Natural killer cell (primary cell): ENCODE measurements at regions of chr11 and their contacts with region 1.

Region 1: GRCh38 chr11:59171508-59172322 is at the start of gene DTX4:
- DNase-seq: peak; percentile 86 to 93
- ATAC-seq: peak; percentile 90 to 95 (median 91)
- H3K4me3 ChIP-seq: peak within 1 kb of the TSS; percentile 69
- H3K4me3 Mint-ChIP-seq: peak within 1 kb of the TSS; percentile 88
- H3K27ac ChIP-seq: peak within 1 kb of the TSS; percentile 39
- H3K27ac Mint-ChIP-seq: peak within 1 kb of the TSS in 1 of 2 donors; percentile 40
- H3K4me1 ChIP-seq: peaks cover 12% of the 10 kb centered on the region
- H3K4me1 Mint-ChIP-seq: peaks cover 7 to 9% of the 10 kb centered on the region in 2 donors
- H3K27me3 ChIP-seq: peaks cover 9% of the 10 kb centered on the region
- H3K27me3 Mint-ChIP-seq: peaks cover 14 to 19% of the 10 kb centered on the region in 2 donors
- CTCF ChIP-seq: peak; percentile 84
- total RNA-seq, gene DTX4: 0.21 to 0.90 (median 0.59) TPM

Region 2: GRCh38 chr11:58941838-58942237 is 229.9 kb before region 1 on chr11:
- intact Hi-C with region 1: no loop called
- DNase-seq: no peak
- ATAC-seq: no peak
- H3K4me3 ChIP-seq: no peak overlapping the region
- H3K4me3 Mint-ChIP-seq: no peak overlapping the region
- H3K27ac ChIP-seq: no peak overlapping the region
- H3K27ac Mint-ChIP-seq: no peak overlapping the region
- H3K4me1 ChIP-seq: no peaks in the 10 kb centered on the region
- H3K4me1 Mint-ChIP-seq: no peaks in the 10 kb centered on the region
- H3K27me3 ChIP-seq: no peaks in the 10 kb centered on the region
- H3K27me3 Mint-ChIP-seq: peaks cover 2 to 7% of the 10 kb centered on the region in 2 donors
- CTCF ChIP-seq: no peak

Region 3: DNA sequence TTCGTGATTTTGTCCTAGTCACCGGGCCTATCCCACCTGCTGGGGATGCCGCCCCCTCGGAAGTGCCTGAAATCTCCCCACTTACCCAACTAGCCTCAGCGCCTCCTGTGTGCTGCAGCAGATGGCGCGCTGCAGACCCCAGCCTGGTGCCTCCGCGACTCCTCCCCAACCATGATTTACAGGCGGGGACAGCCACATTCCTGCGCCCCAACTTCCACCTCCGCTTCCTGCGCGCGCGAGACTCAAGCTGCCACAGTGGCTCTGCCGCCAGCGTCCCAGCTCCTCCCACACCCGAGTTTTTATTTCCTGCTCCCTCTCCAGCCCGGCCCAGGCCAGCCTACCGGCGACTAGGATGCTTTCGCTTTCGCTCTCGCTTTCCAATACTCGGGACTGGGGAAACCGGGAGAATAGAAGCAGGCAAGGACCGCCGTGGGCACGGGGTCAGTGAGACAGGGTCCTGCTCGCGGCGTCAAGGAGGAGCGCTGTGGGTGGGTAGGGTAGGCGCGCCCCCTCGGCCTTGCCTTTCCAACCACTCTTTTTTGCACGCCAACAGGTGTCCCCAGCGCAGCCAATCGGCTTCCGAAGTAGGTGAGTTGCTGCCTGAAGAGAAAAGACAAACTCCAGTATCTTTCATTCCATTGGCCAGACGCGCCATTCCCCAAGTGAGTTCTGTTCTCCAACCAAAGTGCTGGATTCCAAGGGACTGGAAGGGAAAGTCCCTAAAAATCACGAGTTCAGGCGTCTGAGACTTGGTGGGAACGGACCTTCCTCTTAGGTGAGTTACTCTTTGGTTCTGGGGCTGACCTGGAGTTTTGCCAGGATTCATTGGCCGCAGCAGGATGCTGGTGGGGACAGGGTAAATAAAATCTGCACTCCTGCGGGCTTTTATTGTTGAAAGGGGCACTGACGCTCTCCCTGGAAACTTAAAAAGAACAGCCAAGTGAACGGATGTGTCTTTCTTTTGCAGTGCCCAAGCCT is 28.9 kb before region 1 on chr11 and contains the start of gene FAM111A:
- intact Hi-C with region 1: loop called (anchors 1 kb)
- DNase-seq: peak; percentile 75 to 94
- ATAC-seq: peak; percentile 83 to 92 (median 85)
- H3K4me3 ChIP-seq: peak within 1 kb of the TSS; percentile 88
- H3K4me3 Mint-ChIP-seq: peak within 1 kb of the TSS; percentile 100
- H3K27ac ChIP-seq: peak within 1 kb of the TSS; percentile 94
- H3K27ac Mint-ChIP-seq: peak within 1 kb of the TSS; percentile 95 to 98
- H3K4me1 ChIP-seq: peaks cover 18% of the 10 kb centered on the region
- H3K4me1 Mint-ChIP-seq: peaks cover 50 to 52% of the 10 kb centered on the region in 2 donors
- H3K27me3 ChIP-seq: no peaks in the 10 kb centered on the region
- H3K27me3 Mint-ChIP-seq: no peaks in the 10 kb centered on the region
- CTCF ChIP-seq: no peak
- total RNA-seq, gene FAM111A: 93.7 to 125 (median 102) TPM

Region 4: DNA sequence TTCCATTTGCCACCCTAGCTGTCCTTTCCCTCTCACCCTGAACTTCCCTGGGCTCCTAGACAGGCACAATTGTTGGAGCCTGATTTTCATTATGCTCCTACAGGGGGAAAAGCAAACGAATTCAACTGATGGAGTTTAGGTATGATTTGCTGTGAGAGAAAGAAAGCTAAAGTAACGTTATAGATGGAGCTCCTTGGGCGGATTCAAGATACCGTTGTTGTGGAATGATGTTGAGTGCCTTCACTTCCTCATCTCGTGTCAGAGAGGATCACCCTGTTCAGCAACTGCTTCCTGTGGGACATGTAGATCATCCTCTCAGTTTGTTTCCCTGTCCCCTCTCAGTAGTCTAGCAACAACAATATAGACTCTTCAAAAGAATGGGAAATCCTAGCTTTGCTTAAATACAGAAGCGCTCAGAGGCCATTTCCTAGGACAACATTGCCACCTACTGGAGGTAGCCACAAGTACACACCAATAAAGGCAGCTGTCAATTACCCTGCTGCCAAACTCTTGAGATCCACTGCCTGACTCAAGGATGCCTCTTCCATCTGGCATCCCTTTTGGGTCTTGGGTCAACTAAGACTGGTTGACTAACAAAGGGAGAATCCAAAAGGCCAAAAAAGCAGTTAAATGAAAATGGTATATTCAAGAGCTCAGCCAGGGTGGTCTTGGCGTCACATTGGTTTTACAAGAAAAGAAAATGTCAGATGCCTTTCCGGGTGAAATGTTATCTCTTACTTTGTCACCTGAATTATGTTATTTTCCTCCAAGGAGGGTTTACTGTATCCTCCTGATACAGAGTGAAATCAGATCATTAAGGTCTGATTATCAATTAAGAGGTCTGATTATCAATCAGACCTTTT is 13.3 kb before region 1 on chr11:
- intact Hi-C with region 1: no loop called
- DNase-seq: peak; percentile 31 to 88
- ATAC-seq: peak; percentile 94 to 99 (median 99)
- H3K4me3 ChIP-seq: no peak overlapping the region
- H3K4me3 Mint-ChIP-seq: no peak overlapping the region
- H3K27ac ChIP-seq: no peak overlapping the region
- H3K27ac Mint-ChIP-seq: no peak overlapping the region
- H3K4me1 ChIP-seq: peaks cover 4% of the 10 kb centered on the region
- H3K4me1 Mint-ChIP-seq: peaks cover 8 to 9% of the 10 kb centered on the region in 2 donors
- H3K27me3 ChIP-seq: no peaks in the 10 kb centered on the region
- H3K27me3 Mint-ChIP-seq: peaks cover 0 to 5% of the 10 kb centered on the region in 2 donors
- CTCF ChIP-seq: peak; percentile 75

Region 5: DNA sequence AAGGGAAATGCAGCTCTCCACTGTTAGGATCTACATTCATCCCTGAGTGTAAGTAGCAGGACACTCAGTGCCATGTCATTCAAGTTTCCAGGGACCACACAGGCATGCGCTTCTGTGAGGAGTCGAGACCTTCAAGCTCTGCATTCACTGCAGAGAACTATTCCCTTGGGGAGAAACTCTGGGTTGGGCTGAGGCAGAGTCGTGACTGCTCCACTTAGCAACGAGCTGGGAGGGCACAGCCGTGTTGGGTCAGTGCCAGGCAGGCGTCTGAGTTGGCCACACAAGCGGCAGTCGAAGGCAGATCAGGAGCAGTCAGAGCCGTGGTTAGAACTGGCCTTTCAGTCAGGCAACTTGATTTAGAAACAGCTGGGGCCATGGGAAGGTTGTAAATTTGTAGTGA is 26.3 kb after region 1 on chr11:
- intact Hi-C with region 1: no loop called
- DNase-seq: no peak
- ATAC-seq: no peak
- H3K4me3 ChIP-seq: no peak overlapping the region
- H3K4me3 Mint-ChIP-seq: no peak overlapping the region
- H3K27ac ChIP-seq: no peak overlapping the region
- H3K27ac Mint-ChIP-seq: no peak overlapping the region
- H3K4me1 ChIP-seq: no peaks in the 10 kb centered on the region
- H3K4me1 Mint-ChIP-seq: no peaks in the 10 kb centered on the region
- H3K27me3 ChIP-seq: no peaks in the 10 kb centered on the region
- H3K27me3 Mint-ChIP-seq: peaks cover 0 to 15% of the 10 kb centered on the region in 2 donors
- CTCF ChIP-seq: no peak

Region 6: DNA sequence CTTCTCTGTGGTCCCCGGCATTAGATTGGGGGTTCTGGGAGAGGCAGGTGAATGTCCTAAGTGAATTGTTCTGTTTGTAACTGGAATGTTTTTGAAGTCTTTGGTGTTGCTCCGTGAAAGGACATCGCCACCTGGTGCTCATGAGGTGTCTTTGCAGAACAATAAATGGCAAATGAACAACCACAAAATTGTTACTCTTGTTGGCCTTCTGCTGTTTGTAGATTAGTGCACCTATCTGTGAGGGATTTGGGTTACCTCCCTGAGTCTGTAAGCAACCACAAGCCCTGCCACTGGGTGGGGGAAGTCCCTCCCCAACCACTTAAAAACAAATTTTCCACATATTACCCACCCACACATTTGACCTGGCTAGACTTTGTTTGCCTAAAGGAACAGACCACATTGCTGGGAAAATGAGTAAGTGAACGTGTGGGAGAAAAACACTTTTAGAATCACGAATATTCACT is 36.3 kb after region 1 on chr11:
- intact Hi-C with region 1: loop called (anchors 1 kb)
- DNase-seq: peak in 1 of 2 donors; percentile 76
- ATAC-seq: peak; percentile 35 to 70 (median 58)
- H3K4me3 ChIP-seq: peak overlapping the region; percentile 4
- H3K4me3 Mint-ChIP-seq: peak overlapping the region; percentile 52
- H3K27ac ChIP-seq: no peak overlapping the region
- H3K27ac Mint-ChIP-seq: no peak overlapping the region
- H3K4me1 ChIP-seq: peaks cover 18% of the 10 kb centered on the region
- H3K4me1 Mint-ChIP-seq: peaks cover 7 to 12% of the 10 kb centered on the region in 2 donors
- H3K27me3 ChIP-seq: no peaks in the 10 kb centered on the region
- H3K27me3 Mint-ChIP-seq: peaks cover 0 to 10% of the 10 kb centered on the region in 2 donors
- CTCF ChIP-seq: peak; percentile 73

Region 7: DNA sequence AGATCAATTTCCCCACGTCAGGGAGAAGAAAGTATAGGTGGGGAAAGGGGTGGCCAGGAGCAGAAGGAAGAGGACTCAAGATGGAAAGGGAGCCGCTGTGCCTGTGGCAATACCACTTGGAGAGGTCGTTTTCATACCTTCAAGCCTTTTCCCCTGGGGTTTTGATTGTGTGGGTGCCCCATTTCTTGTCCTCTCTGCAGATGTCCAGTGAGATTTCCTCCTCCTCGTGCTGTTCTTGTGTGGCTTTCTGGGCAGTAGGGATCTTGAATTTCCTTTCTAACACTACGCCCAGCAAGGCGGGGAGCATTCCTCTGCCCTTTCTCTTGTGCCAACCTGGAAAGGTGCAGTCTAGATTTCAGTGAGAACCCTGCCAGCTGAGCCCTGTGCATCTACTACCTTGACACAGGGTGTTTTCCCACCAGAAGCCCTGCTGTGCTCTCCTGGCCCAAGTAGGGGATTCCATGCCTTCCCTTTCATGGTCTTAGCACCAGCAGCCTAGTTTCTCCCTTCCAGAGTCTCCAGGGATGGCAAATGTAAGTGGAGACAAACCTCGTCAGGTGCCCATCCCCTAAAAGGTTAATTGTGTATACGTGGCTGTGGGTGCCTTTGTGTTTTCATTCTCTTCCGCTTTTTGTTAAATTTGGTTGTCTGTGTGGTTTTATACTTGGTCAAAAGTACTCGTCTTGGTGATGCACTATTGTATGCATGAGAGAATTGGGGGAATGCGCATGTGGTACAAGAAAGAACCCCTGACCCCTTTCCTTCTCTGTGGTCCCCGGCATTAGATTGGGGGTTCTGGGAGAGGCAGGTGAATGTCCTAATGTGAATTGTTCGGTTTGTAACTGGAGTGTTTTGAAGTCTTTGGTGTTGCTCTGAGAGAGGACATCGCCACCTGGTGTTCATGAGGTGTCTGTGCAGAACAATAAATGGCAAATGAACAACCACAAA is 112.4 kb after region 1 on chr11:
- intact Hi-C with region 1: loop called (anchors 1 kb)
- DNase-seq: peak in 1 of 2 donors; percentile 83
- ATAC-seq: peak; percentile 78 to 87 (median 82)
- H3K4me3 ChIP-seq: no peak overlapping the region
- H3K4me3 Mint-ChIP-seq: peak overlapping the region; percentile 75
- H3K27ac ChIP-seq: peak overlapping the region; percentile 40
- H3K27ac Mint-ChIP-seq: peak overlapping the region in 1 of 2 donors; percentile 63
- H3K4me1 ChIP-seq: peaks cover 15% of the 10 kb centered on the region
- H3K4me1 Mint-ChIP-seq: peaks cover 8 to 9% of the 10 kb centered on the region in 2 donors
- H3K27me3 ChIP-seq: no peaks in the 10 kb centered on the region
- H3K27me3 Mint-ChIP-seq: peaks cover 18 to 21% of the 10 kb centered on the region in 2 donors
- CTCF ChIP-seq: peak; percentile 81

Region 8: DNA sequence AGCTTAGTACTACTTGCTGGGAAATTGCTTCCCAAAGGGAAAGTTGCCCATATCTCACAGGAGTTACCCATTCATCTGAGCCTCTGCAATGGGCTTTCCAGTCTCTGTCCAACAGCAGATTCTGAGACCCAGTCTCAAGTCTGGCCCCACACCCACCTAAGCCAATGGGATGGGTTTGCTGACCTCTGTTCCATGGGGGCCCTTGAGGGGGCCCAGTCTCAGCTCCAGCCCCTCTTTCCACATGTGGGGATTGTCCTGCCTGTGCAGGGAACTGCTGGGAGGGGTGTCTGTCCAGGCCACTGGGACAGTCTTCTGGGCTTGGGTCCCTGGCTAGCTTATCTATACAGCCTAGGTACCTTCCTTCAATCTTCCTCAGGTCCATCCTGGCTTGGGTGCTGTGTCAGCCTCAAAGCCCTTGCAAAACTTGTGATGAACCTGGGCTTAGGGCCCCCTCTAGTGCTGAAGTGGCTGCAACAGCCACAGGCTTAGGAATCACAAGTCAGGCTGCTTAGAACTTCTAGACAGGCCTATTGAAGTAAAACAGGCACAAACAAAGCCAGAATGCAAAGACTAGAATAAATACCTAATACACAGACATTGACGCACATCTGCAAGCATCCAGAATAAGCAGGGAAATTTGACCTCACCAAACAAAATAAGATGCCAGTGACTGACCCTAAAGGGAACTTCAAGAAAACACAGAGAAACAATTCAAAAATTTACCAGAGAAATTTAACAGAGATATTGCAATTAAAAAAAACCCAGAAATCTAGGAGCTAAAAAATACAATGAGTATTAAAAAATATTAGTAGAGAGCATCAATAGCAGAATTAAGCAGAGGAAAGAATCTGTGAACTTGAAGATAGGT is 508.8 kb after region 1 on chr11:
- intact Hi-C with region 1: loop called (anchors 5 kb)
- DNase-seq: peak; percentile 30 to 76
- ATAC-seq: peak; percentile 71 to 90 (median 88)
- H3K4me3 ChIP-seq: no peak overlapping the region
- H3K4me3 Mint-ChIP-seq: no peak overlapping the region
- H3K27ac ChIP-seq: no peak overlapping the region
- H3K27ac Mint-ChIP-seq: no peak overlapping the region
- H3K4me1 ChIP-seq: no peaks in the 10 kb centered on the region
- H3K4me1 Mint-ChIP-seq: no peaks in the 10 kb centered on the region
- H3K27me3 ChIP-seq: peaks cover 4% of the 10 kb centered on the region
- H3K27me3 Mint-ChIP-seq: peaks cover 11 to 22% of the 10 kb centered on the region in 2 donors
- CTCF ChIP-seq: peak; percentile 63